ENCODE measurements at regions of chr19 and their contacts with region 1.

Region 1: GRCh38 chr19:19214892-19215291 is 3.1 kb downstream of the NCAN start:
- DNase-seq: no peak
- CTCF ChIP-seq: no peak

Region 2: DNA sequence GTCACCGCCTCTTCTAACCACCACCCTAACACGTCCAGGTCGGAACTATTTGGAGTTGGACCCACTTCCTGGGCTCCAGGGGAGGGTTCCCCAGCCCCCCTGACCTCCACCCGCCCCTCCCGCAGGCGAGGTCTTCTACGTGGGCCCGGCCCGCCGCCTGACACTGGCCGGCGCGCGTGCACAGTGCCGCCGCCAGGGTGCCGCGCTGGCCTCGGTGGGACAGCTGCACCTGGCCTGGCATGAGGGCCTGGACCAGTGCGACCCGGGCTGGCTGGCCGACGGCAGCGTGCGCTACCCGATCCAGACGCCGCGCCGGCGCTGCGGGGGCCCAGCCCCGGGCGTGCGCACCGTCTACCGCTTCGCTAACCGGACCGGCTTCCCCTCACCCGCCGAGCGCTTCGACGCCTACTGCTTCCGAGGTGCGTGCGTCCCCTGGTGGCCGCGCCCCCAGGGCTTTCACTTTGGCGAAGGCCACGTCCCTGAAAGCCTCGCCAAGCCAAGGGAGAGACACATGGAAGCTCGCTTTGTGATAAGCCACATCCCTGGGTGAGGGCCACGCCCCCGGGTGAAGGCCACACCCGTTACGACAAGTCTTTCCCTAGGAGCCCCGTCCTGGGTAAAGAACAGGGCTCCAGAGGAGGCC is 10.1 kb after region 1 on chr19:
- CTCF ChIA-PET with region 1: interaction called, 12 read pairs
- POLR2A ChIA-PET with region 1: no interaction called
- DNase-seq: peak; percentile 89
- CTCF ChIP-seq: peak; percentile 75